ENCODE measurements at regions of chr13 and their contacts with region 1.

Region 1: GRCh38 chr13:45047394-45048310 is 58.3 kb downstream of the GPALPP1 start:
- DNase-seq: peak; percentile 60 to 73
- H3K4me3 ChIP-seq: peak overlapping the region; percentile 38 to 46
- H3K27ac ChIP-seq: no peak overlapping the region
- H3K4me1 ChIP-seq: peaks cover 0 to 10% (median 5%) of the 10 kb centered on the region in 4 donors
- H3K27me3 ChIP-seq: no peaks in the 10 kb centered on the region
- CTCF ChIP-seq: peak; percentile 86 to 93

Region 2: DNA sequence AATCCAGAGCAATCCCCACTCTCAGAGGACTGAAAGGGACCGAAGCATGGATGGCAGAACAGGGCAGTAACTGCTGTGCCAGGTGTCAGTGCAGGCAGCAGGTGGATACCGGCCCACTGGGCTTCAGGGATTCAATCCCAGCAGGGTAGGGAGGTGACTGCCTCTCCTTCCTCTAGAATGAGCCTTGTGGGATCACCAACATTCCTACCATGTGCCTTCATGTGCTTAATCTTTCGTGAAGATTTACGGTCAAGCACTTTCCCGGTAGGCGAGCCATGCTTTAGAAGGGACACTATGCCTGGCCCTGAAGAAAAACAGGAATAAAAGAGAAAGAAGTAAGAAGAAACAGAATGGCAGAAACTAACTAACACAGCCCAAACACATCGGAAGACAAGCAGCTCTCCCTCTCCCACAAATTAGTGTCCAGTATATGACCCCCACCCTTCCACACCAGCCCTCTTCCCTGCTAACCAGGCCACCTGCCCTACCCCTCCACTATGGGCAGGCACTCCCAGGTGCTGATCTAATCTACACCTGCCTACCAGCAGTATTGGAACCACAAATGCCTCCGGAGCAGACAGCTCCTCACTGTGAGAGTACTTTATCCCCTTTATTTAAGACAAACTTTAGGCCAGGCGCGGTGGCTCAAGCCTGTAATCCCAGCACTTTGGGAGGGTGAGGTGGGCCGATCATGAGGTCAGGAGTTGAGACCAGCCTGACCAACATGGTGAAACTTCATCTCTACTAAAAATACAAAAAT is 220.9 kb before region 1 on chr13:
- intact Hi-C with region 1: no loop called
- DNase-seq: no peak
- H3K4me3 ChIP-seq: no peak overlapping the region
- H3K27ac ChIP-seq: no peak overlapping the region
- H3K4me1 ChIP-seq: no peaks in the 10 kb centered on the region
- H3K27me3 ChIP-seq: no peaks in the 10 kb centered on the region
- CTCF ChIP-seq: no peak

Region 3: DNA sequence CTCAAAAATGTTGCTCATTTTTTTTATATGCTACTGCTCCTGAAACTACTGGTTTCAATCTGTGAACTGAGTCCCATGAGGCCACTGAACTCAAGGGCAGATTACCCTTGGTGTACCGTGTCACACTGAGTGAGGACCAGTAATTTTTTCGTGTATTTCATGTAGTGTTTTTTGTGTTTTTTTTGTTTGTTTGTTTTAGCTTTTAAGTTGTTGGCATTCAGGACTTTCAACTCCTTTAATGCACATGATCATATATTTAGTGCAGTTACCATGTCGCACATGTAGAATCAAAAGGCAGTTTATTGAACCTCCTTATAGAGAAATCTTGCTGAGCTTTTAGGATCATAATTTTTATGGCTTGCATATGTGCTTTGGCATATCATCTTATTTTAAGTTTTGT is 235.3 kb after region 1 on chr13:
- intact Hi-C with region 1: loop called (anchors 2 kb)
- DNase-seq: no peak
- H3K4me3 ChIP-seq: no peak overlapping the region
- H3K27ac ChIP-seq: no peak overlapping the region
- H3K4me1 ChIP-seq: no peaks in the 10 kb centered on the region
- H3K27me3 ChIP-seq: no peaks in the 10 kb centered on the region
- CTCF ChIP-seq: no peak

Region 4: DNA sequence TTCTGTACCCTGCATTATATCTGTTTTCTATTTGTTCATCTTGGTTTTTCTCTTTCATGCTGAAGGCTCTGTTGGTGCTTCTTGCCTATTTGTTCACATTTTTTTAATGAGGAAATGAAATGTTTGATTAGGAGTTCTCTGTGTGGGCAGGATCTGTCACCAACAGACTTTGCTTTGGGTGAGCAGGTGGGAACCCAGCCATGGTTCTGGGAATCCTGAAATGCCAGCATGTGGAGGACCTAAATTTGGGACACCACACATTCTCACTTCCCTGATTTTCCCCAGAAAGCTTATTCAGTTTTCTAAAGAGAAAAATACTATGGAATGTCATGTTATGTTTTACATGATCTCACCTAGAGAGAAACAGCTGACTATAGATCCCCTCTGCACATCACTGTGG is 259.3 kb after region 1 on chr13:
- intact Hi-C with region 1: loop called (anchors 5 kb)
- DNase-seq: no peak
- H3K4me3 ChIP-seq: no peak overlapping the region
- H3K27ac ChIP-seq: no peak overlapping the region
- H3K4me1 ChIP-seq: peaks cover 0 to 19% (median 12%) of the 10 kb centered on the region in 4 donors
- H3K27me3 ChIP-seq: peaks cover 0 to under 1% of the 10 kb centered on the region in 2 donors
- CTCF ChIP-seq: no peak